Naive thymus-derived CD4-positive, alpha-beta T cell (primary cell): ENCODE measurements at regions of chr2 and their contacts with region 1.

Region 1: GRCh38 chr2:217650716-217651360 is 352.0 kb downstream of the TNS1 start:
- DNase-seq: peak in 5 of 9 donors; percentile 23 to 42 (median 24)
- ATAC-seq: peak; percentile 56
- H3K4me3 ChIP-seq: no peak overlapping the region
- H3K4me3 Mint-ChIP-seq: no peak overlapping the region
- H3K27ac ChIP-seq: no peak overlapping the region
- H3K27ac Mint-ChIP-seq: peak overlapping the region in 1 of 9 donors; percentile 43
- H3K4me1 ChIP-seq: no peaks in the 10 kb centered on the region
- H3K4me1 Mint-ChIP-seq: peaks cover 0 to 7% (median 2%) of the 10 kb centered on the region in 7 donors
- H3K27me3 ChIP-seq: no peaks in the 10 kb centered on the region
- H3K27me3 Mint-ChIP-seq: no peaks in the 10 kb centered on the region

Region 2: GRCh38 chr2:217756375-217757107 is 105.7 kb after region 1 on chr2:
- CTCF ChIA-PET with region 1: no interaction called
- POLR2A ChIA-PET with region 1: no interaction called
- intact Hi-C with region 1: loop called in 1 of 2 experiments (anchors 2 kb)
- DNase-seq: peak; percentile 48 to 76 (median 69)
- ATAC-seq: peak; percentile 91
- H3K4me3 ChIP-seq: peak overlapping the region; percentile 51
- H3K4me3 Mint-ChIP-seq: peak overlapping the region; percentile 9 to 73 (median 62)
- H3K27ac ChIP-seq: no peak overlapping the region
- H3K27ac Mint-ChIP-seq: peak overlapping the region in 1 of 9 donors; percentile 51
- H3K4me1 ChIP-seq: peaks cover 0 to 26% of the 10 kb centered on the region in 2 donors
- H3K4me1 Mint-ChIP-seq: peaks cover 18 to 36% (median 25%) of the 10 kb centered on the region in 7 donors
- H3K27me3 ChIP-seq: no peaks in the 10 kb centered on the region
- H3K27me3 Mint-ChIP-seq: peaks cover 0 to 11% (median 0%) of the 10 kb centered on the region in 5 donors

Region 3: GRCh38 chr2:218074031-218074430 is 423.2 kb after region 1 on chr2:
- CTCF ChIA-PET with region 1: no interaction called
- POLR2A ChIA-PET with region 1: no interaction called
- intact Hi-C with region 1: no loop called
- DNase-seq: no peak
- ATAC-seq: peak; percentile 72
- H3K4me3 ChIP-seq: no peak overlapping the region
- H3K4me3 Mint-ChIP-seq: no peak overlapping the region
- H3K27ac ChIP-seq: no peak overlapping the region
- H3K27ac Mint-ChIP-seq: no peak overlapping the region
- H3K4me1 ChIP-seq: peaks cover 0 to 2% of the 10 kb centered on the region in 2 donors
- H3K4me1 Mint-ChIP-seq: peaks cover 0 to 6% (median 0%) of the 10 kb centered on the region in 7 donors
- H3K27me3 ChIP-seq: no peaks in the 10 kb centered on the region
- H3K27me3 Mint-ChIP-seq: no peaks in the 10 kb centered on the region